MCF 10A (cell line): ENCODE measurements at regions of chr1 and their contacts with region 1.

Region 1: GRCh38 chr1:28877132-28877781 is 37.1 kb upstream of the EPB41 start:
- DNase-seq: peak; percentile 85
- H3K4me3 Mint-ChIP-seq: no peak overlapping the region
- H3K27ac Mint-ChIP-seq: no peak overlapping the region
- H3K4me1 Mint-ChIP-seq: peaks cover 4% of the 10 kb centered on the region
- H3K27me3 Mint-ChIP-seq: no peaks in the 10 kb centered on the region
- CTCF ChIP-seq: peak; percentile 91

Region 2: GRCh38 chr1:28518000-28518744 is 359.1 kb before region 1 on chr1:
- CTCF ChIA-PET with region 1: interaction called, 4 read pairs
- POLR2A ChIA-PET with region 1: interaction called, 9 read pairs
- intact Hi-C with region 1: loop called (anchors 1 kb)
- DNase-seq: peak; percentile 89
- H3K4me3 Mint-ChIP-seq: peak overlapping the region; percentile 69
- H3K27ac Mint-ChIP-seq: peak overlapping the region; percentile 75
- H3K4me1 Mint-ChIP-seq: peaks cover 29% of the 10 kb centered on the region
- H3K27me3 Mint-ChIP-seq: no peaks in the 10 kb centered on the region
- CTCF ChIP-seq: peak; percentile 93

Region 3: GRCh38 chr1:28756846-28757245 is 120.4 kb before region 1 on chr1:
- CTCF ChIA-PET with region 1: interaction called, 11 read pairs
- POLR2A ChIA-PET with region 1: interaction called, 3 read pairs
- intact Hi-C with region 1: no loop called
- DNase-seq: peak; percentile 22
- H3K4me3 Mint-ChIP-seq: no peak overlapping the region
- H3K27ac Mint-ChIP-seq: no peak overlapping the region
- H3K4me1 Mint-ChIP-seq: peaks cover 24% of the 10 kb centered on the region
- H3K27me3 Mint-ChIP-seq: no peaks in the 10 kb centered on the region
- CTCF ChIP-seq: no peak

Region 4: GRCh38 chr1:28782011-28782410 is 95.2 kb before region 1 on chr1:
- CTCF ChIA-PET with region 1: interaction called, 120 read pairs
- POLR2A ChIA-PET with region 1: interaction called, 12 read pairs
- intact Hi-C with region 1: loop called (anchors 1 kb)
- DNase-seq: no peak
- H3K4me3 Mint-ChIP-seq: no peak overlapping the region
- H3K27ac Mint-ChIP-seq: no peak overlapping the region
- H3K4me1 Mint-ChIP-seq: peaks cover 13% of the 10 kb centered on the region
- H3K27me3 Mint-ChIP-seq: no peaks in the 10 kb centered on the region
- CTCF ChIP-seq: no peak

Region 5: DNA sequence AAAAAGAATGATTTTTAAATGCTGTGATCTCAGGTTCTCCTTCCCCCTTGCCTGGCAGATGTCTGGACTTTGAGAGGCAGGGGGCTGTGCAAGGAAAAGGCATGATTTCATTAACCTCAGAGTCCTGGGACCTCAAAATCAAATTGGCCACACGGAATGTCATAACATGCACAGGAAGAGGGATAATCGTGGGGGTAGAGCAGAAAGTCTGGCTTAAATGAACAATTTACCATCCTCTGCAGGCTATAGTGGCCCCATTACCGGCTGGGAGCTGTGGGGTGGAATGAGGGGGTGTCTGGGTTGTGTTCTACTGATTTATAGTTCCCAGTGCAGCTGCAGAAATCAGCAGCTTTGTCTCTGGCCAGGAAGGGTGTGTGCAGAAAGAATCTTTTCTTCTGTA is 54.5 kb before region 1 on chr1:
- CTCF ChIA-PET with region 1: no interaction called
- POLR2A ChIA-PET with region 1: no interaction called
- intact Hi-C with region 1: no loop called
- DNase-seq: no peak
- H3K4me3 Mint-ChIP-seq: no peak overlapping the region
- H3K27ac Mint-ChIP-seq: no peak overlapping the region
- H3K4me1 Mint-ChIP-seq: no peaks in the 10 kb centered on the region
- H3K27me3 Mint-ChIP-seq: peaks cover 9% of the 10 kb centered on the region
- CTCF ChIP-seq: no peak

Region 6: GRCh38 chr1:28865997-28866650 is 11.1 kb before region 1 on chr1:
- CTCF ChIA-PET with region 1: interaction called, 22 read pairs
- POLR2A ChIA-PET with region 1: interaction called, 4 read pairs
- intact Hi-C with region 1: no loop called
- DNase-seq: peak; percentile 50
- H3K4me3 Mint-ChIP-seq: no peak overlapping the region
- H3K27ac Mint-ChIP-seq: no peak overlapping the region
- H3K4me1 Mint-ChIP-seq: peaks cover 7% of the 10 kb centered on the region
- H3K27me3 Mint-ChIP-seq: peaks cover 28% of the 10 kb centered on the region
- CTCF ChIP-seq: no peak

Region 7: GRCh38 chr1:29202584-29203340 is 325.5 kb after region 1 on chr1:
- CTCF ChIA-PET with region 1: interaction called, 32 read pairs
- POLR2A ChIA-PET with region 1: interaction called, 5 read pairs
- intact Hi-C with region 1: loop called (anchors 1 kb)
- DNase-seq: peak; percentile 98
- H3K4me3 Mint-ChIP-seq: no peak overlapping the region
- H3K27ac Mint-ChIP-seq: peak overlapping the region; percentile 46
- H3K4me1 Mint-ChIP-seq: peaks cover 7% of the 10 kb centered on the region
- H3K27me3 Mint-ChIP-seq: no peaks in the 10 kb centered on the region
- CTCF ChIP-seq: peak; percentile 85